ENCODE measurements at regions of chr2 and their contacts with region 1.

Region 1: DNA sequence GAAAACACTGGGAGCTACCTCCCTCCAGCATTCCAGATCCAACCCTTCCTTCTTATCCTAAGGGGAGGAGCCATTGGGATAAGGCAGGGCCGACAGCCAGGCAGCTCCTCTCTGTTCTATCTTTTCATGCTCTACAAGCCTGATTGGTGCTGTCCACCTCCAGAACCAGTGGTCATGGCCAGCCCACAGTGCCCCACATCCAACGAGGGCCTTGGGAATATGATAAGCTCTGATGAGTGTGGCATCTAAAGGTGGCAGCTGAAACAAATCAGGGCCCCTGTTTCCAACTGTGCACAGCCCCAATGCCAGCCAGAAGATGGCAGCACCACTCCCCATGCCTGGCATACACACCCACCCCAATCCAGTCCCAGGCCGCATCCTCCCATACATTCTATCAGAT is 329.3 kb downstream of the C1D start:
- DNase-seq: peak; percentile 70
- ATAC-seq: peak; percentile 98
- H3K4me3 Mint-ChIP-seq: no peak overlapping the region
- H3K27ac Mint-ChIP-seq: no peak overlapping the region
- H3K4me1 Mint-ChIP-seq: no peaks in the 10 kb centered on the region
- H3K27me3 Mint-ChIP-seq: no peaks in the 10 kb centered on the region
- CTCF ChIP-seq: peak; percentile 41; the same call in 1 of the 2 replicates

Region 2: GRCh38 chr2:67532390-67532789 is 201.1 kb before region 1 on chr2:
- CTCF ChIA-PET with region 1: no interaction called
- POLR2A ChIA-PET with region 1: no interaction called
- DNase-seq: no peak
- ATAC-seq: no peak
- H3K4me3 Mint-ChIP-seq: no peak overlapping the region
- H3K27ac Mint-ChIP-seq: no peak overlapping the region
- H3K4me1 Mint-ChIP-seq: no peaks in the 10 kb centered on the region
- H3K27me3 Mint-ChIP-seq: no peaks in the 10 kb centered on the region; the same call in 1 of the 2 replicates
- CTCF ChIP-seq: no peak

Region 3: GRCh38 chr2:67840460-67841068 is 107.0 kb after region 1 on chr2:
- CTCF ChIA-PET with region 1: interaction called, 45 read pairs
- POLR2A ChIA-PET with region 1: no interaction called
- DNase-seq: peak; percentile 74
- ATAC-seq: peak; percentile 100
- H3K4me3 Mint-ChIP-seq: no peak overlapping the region
- H3K27ac Mint-ChIP-seq: no peak overlapping the region
- H3K4me1 Mint-ChIP-seq: peaks cover 2% of the 10 kb centered on the region; the same call in 1 of the 2 replicates
- H3K27me3 Mint-ChIP-seq: no peaks in the 10 kb centered on the region
- CTCF ChIP-seq: peak; percentile 35

Region 4: DNA sequence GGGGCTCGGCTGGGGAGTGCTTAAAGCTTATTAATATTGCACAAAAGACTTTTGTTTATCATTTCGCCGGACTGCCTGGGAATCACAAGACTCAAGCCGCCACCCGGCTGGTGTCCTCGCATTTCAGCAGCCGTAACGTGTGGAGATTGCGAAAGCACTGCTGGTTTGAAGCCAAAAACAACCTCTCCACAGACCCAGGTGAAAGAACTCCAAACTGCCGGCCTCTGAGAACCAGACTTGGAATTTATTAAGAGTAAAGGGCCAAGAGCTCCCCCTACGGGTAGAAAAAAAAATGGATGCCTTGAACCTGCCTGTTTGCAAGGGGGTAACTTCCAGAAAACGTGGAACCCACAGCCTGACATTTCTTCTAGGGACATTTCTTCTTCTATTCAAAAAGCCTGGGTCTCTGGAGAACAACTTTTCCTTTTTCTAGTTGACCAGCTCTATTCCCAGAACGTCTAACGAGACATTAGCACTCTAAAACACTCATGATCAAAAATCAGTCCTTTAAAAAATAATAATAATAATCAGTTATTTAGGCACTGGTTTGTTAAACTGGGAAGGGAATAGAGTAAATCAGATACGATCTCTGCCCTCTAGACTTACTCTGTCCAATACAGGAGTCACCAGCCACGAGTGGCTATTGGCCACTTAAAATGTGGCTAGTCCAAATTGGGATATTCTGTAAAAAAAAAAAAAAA is 113.0 kb after region 1 on chr2:
- CTCF ChIA-PET with region 1: interaction called, 45 read pairs
- POLR2A ChIA-PET with region 1: no interaction called
- DNase-seq: peak; percentile 72
- ATAC-seq: peak; percentile 88
- H3K4me3 Mint-ChIP-seq: peak overlapping the region; percentile 31
- H3K27ac Mint-ChIP-seq: no peak overlapping the region
- H3K4me1 Mint-ChIP-seq: peaks cover 16% of the 10 kb centered on the region
- H3K27me3 Mint-ChIP-seq: no peaks in the 10 kb centered on the region; the same call in 1 of the 2 replicates
- CTCF ChIP-seq: peak; percentile 52

Measured in WTC11 (cell line).